Activated CD4-positive, alpha-beta T cell treated with anti-CD3 and anti-CD28 coated beads, Interleukin-2, amount 10 ng/mL, durations not matched to agents 24 days and 14 days (primary cell): ENCODE measurements at regions of chr20 and their contacts with region 1.

Region 1: GRCh38 chr20:2172305-2173175 is 70.9 kb downstream of the STK35 start:
- DNase-seq: peak; percentile 90
- H3K4me3 Mint-ChIP-seq: no peak overlapping the region
- H3K27ac Mint-ChIP-seq: no peak overlapping the region
- H3K4me1 Mint-ChIP-seq: peaks cover 3% of the 10 kb centered on the region
- H3K27me3 Mint-ChIP-seq: peaks cover 17% of the 10 kb centered on the region

Region 2: DNA sequence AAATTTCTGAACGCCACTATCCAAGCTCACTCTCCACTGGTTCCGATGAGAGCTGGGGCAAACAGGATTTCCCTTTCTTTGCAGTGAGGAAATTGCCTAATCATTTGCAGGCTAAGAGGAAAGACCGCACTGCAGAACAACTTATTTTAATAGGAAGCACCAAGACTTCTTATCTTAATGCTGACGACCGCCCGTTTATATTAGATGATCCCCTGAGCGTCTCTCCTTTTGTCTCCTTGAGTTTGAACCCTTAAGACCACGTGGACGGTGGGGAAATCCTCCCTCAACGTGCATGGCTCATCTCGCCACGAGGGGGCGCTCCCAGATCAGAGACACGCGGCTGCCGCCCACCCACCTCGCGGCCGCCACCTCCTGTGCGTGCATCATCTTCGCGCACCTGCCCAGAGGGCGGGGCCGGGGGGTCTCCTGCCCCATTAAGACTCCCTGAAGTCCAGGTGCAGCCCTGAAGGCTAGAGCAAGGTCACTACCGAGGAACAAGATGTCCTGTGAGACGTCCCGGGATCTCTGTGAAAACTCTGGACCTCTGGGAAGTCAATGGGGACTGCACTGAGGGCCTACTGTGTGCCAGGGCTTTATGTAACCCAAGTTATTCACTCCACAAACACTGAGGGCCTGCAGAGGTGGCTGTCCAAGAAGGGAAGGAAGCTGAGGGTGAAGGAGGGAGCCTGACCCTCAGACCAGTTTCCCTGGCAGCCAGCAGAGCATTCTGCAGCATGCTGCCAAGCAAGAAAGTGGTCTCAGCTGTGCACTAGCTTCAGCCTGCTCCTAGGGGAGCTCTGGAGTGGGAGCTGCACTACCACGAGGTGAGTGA is 206.8 kb before region 1 on chr20:
- intact Hi-C with region 1: loop called (anchors 1 kb)
- DNase-seq: peak; percentile 91
- H3K4me3 Mint-ChIP-seq: peak overlapping the region; percentile 63
- H3K27ac Mint-ChIP-seq: no peak overlapping the region
- H3K4me1 Mint-ChIP-seq: peaks cover 9% of the 10 kb centered on the region
- H3K27me3 Mint-ChIP-seq: peaks cover 20% of the 10 kb centered on the region

Region 3: GRCh38 chr20:2005831-2006426 is 166.6 kb before region 1 on chr20:
- intact Hi-C with region 1: loop called (anchors 1 kb)
- DNase-seq: peak; percentile 92
- H3K4me3 Mint-ChIP-seq: no peak overlapping the region
- H3K27ac Mint-ChIP-seq: no peak overlapping the region
- H3K4me1 Mint-ChIP-seq: peaks cover 2% of the 10 kb centered on the region
- H3K27me3 Mint-ChIP-seq: peaks cover 2% of the 10 kb centered on the region